Left colon (tissue), 2 donors: ENCODE measurements at regions of chrX and their contacts with region 1.

Region 1: GRCh38 chrX:120664081-120664480 is 34.2 kb upstream of the C1GALT1C1 start:
- DNase-seq: no peak
- ATAC-seq: no peak

Region 2: GRCh38 chrX:120287513-120288112 is 376.5 kb before region 1 on chrX:
- intact Hi-C with region 1: no loop called
- DNase-seq: no peak
- ATAC-seq: no peak

Region 3: GRCh38 chrX:120499301-120500072 is 164.6 kb before region 1 on chrX:
- intact Hi-C with region 1: loop called in 1 of 2 experiments (anchors 10 kb)
- DNase-seq: no peak
- ATAC-seq: no peak